ENCODE measurements at regions of chr6 and their contacts with region 1.

Region 1: GRCh38 chr6:26270903-26271667 is 93.9 kb upstream of the BTN3A2 start:
- DNase-seq: peak; percentile 80
- ATAC-seq: peak; percentile 38
- H3K4me3 Mint-ChIP-seq: no peak overlapping the region
- H3K27ac Mint-ChIP-seq: no peak overlapping the region
- H3K4me1 Mint-ChIP-seq: peaks cover 24% of the 10 kb centered on the region
- H3K27me3 Mint-ChIP-seq: no peaks in the 10 kb centered on the region

Region 2: GRCh38 chr6:25404693-25405169 is 866.4 kb before region 1 on chr6:
- POLR2A ChIA-PET with region 1: no interaction called
- DNase-seq: peak; percentile 64
- ATAC-seq: peak; percentile 93
- H3K4me3 Mint-ChIP-seq: no peak overlapping the region
- H3K27ac Mint-ChIP-seq: no peak overlapping the region
- H3K4me1 Mint-ChIP-seq: peaks cover 20% of the 10 kb centered on the region
- H3K27me3 Mint-ChIP-seq: no peaks in the 10 kb centered on the region

Region 3: GRCh38 chr6:26045065-26045927 is 225.8 kb before region 1 on chr6:
- POLR2A ChIA-PET with region 1: interaction called, 23 read pairs
- DNase-seq: peak; percentile 82
- ATAC-seq: peak; percentile 56
- H3K4me3 Mint-ChIP-seq: peak overlapping the region; percentile 86
- H3K27ac Mint-ChIP-seq: peak overlapping the region; percentile 99
- H3K4me1 Mint-ChIP-seq: peaks cover 41% of the 10 kb centered on the region
- H3K27me3 Mint-ChIP-seq: no peaks in the 10 kb centered on the region

Region 4: DNA sequence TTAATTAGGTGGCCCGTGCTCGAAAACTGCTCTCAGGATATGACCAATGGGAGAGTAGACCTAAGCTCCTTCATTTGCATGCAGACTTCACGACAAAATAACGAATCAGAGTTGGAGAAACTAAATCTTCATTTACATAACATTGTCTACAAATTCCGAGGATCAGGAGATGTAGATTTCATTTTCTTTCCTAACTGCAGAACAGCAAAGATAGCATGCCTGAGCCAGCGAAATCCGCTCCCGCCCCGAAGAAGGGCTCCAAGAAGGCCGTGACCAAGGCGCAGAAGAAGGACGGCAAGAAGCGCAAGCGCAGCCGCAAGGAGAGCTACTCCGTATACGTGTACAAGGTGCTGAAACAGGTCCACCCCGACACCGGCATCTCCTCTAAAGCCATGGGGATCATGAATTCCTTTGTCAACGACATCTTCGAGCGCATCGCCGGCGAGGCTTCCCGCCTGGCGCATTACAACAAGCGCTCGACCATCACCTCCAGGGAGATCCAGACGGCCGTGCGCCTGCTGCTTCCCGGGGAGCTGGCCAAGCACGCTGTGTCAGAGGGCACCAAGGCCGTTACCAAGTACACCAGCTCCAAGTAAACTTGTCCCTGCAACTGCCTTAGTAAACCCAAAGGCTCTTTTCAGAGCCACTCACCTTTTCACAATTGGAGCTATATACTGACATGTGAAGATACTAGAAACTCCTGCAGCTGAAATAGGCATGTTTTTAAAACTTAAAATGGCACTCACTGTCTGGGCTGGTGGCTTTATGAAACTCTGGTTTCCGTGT is 87.3 kb before region 1 on chr6:
- POLR2A ChIA-PET with region 1: interaction called, 152 read pairs
- DNase-seq: peak; percentile 78
- ATAC-seq: peak; percentile 85
- H3K4me3 Mint-ChIP-seq: peak overlapping the region; percentile 96
- H3K27ac Mint-ChIP-seq: peak overlapping the region; percentile 99
- H3K4me1 Mint-ChIP-seq: peaks cover 48% of the 10 kb centered on the region
- H3K27me3 Mint-ChIP-seq: no peaks in the 10 kb centered on the region

Region 5: GRCh38 chr6:26223650-26224546 is 47.2 kb before region 1 on chr6:
- POLR2A ChIA-PET with region 1: interaction called, 31 read pairs
- DNase-seq: peak; percentile 59
- ATAC-seq: peak; percentile 77
- H3K4me3 Mint-ChIP-seq: no peak overlapping the region
- H3K27ac Mint-ChIP-seq: no peak overlapping the region
- H3K4me1 Mint-ChIP-seq: peaks cover 29% of the 10 kb centered on the region
- H3K27me3 Mint-ChIP-seq: no peaks in the 10 kb centered on the region

Region 6: DNA sequence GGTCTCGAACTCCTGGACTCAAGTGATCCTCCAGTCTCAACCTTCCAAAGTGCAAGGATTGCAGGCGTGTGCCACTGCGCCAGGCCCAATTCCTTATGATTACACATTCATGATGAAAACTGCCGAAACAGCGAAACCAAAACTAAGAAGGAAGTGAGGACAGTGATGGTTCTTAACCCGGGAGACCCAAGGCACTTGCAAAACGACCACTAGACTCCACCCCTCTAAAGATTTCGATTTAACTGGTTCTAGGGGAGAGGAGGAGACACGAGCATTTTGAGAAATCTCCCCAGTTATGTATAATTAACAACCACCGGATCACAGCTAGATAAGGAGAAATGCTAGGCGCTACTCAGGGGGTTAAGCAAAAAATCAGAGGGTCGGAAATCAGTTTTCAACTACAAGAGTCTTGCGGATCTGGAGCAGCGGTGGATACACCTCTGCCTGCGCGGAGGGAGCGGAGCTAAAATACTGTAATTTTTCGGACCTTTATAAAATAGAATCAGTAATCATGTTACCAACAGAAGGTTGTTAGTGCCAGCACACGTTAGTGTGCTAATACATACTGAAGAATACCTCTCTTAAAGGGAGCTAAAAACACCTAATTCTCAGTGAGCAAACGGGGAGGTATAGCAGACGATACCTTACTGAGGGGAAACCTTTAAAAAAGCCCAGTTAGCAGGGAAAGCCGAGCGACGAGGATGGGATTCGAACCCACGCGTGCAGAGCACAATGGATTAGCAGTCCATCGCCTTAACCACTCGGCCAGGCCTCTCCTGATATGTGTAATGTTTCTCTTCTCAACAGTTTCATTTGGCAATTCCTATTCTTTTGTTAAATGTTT is 33.9 kb after region 1 on chr6:
- POLR2A ChIA-PET with region 1: interaction called, 14 read pairs
- DNase-seq: peak; percentile 59
- ATAC-seq: peak; percentile 87
- H3K4me3 Mint-ChIP-seq: peak overlapping the region; percentile 88
- H3K27ac Mint-ChIP-seq: peak overlapping the region; percentile 97
- H3K4me1 Mint-ChIP-seq: peaks cover 43% of the 10 kb centered on the region
- H3K27me3 Mint-ChIP-seq: no peaks in the 10 kb centered on the region

Region 7: GRCh38 chr6:26342106-26343004 is 71.3 kb after region 1 on chr6:
- POLR2A ChIA-PET with region 1: no interaction called
- DNase-seq: no peak
- ATAC-seq: peak; percentile 32
- H3K4me3 Mint-ChIP-seq: peak overlapping the region; percentile 85
- H3K27ac Mint-ChIP-seq: peak overlapping the region; percentile 67
- H3K4me1 Mint-ChIP-seq: peaks cover 20% of the 10 kb centered on the region
- H3K27me3 Mint-ChIP-seq: peaks cover 9% of the 10 kb centered on the region

Region 8: GRCh38 chr6:27146706-27147505 is 875.8 kb after region 1 on chr6:
- POLR2A ChIA-PET with region 1: interaction called, 40 read pairs
- DNase-seq: peak; percentile 83
- ATAC-seq: peak; percentile 71
- H3K4me3 Mint-ChIP-seq: no peak overlapping the region
- H3K27ac Mint-ChIP-seq: no peak overlapping the region
- H3K4me1 Mint-ChIP-seq: peaks cover 18% of the 10 kb centered on the region
- H3K27me3 Mint-ChIP-seq: no peaks in the 10 kb centered on the region

Region 9: GRCh38 chr6:27893059-27893835 is 1622.2 kb after region 1 on chr6:
- POLR2A ChIA-PET with region 1: interaction called, 19 read pairs
- DNase-seq: peak; percentile 82
- ATAC-seq: peak; percentile 55
- H3K4me3 Mint-ChIP-seq: no peak overlapping the region
- H3K27ac Mint-ChIP-seq: no peak overlapping the region
- H3K4me1 Mint-ChIP-seq: peaks cover 43% of the 10 kb centered on the region
- H3K27me3 Mint-ChIP-seq: no peaks in the 10 kb centered on the region

Measured in activated naive CD8-positive, alpha-beta T cell treated with anti-CD3 and anti-CD28 coated beads, Interleukin-2, amount 10 ng/mL, durations not matched to agents 7 days and 5 days (primary cell).